ENCODE measurements at regions of chr18 and their contacts with region 1.

Region 1: GRCh38 chr18:8608795-8609658 is at the start of gene RAB12:
- DNase-seq: peak; percentile 90
- ATAC-seq: peak; percentile 95 to 97
- total RNA-seq, gene RAB12: 69.5 to 82.2 TPM

Region 2: DNA sequence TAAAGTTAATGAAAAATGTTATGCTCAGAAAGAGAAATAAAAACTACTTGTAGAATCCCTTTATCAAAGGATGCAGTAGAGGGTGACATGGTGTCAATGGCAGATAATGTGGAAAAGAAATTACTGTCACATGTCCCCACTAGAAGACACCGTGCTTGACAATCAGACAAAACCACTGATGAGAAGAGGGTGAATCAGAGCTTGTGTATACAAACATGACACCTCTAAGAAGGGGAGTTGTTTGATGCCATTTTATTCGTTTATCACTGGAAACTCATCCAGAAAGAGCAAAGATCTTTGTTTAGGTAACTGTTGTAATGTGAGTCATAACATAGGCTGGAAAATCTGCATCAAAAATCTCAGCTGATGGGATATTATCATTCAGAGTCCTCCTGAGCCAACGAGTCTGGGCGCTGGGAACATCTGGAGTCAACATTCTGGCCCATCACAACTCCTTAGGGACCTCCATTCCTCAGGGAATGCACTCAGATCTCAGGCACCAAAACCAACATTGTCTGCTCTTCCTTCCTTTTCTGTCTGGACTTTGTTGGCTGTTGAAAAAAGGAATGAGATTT is 49.3 kb before region 1 on chr18:
- intact Hi-C with region 1: loop called in 1 of 2 experiments (anchors 5 kb)
- DNase-seq: no peak
- ATAC-seq: no peak

Region 3: GRCh38 chr18:8704361-8705279 is 95.6 kb after region 1 on chr18:
- intact Hi-C with region 1: no loop called
- DNase-seq: peak; percentile 91
- ATAC-seq: peak; percentile 96 to 97